MCF 10A (cell line): ENCODE measurements at regions of chr10 and their contacts with region 1.

Region 1: DNA sequence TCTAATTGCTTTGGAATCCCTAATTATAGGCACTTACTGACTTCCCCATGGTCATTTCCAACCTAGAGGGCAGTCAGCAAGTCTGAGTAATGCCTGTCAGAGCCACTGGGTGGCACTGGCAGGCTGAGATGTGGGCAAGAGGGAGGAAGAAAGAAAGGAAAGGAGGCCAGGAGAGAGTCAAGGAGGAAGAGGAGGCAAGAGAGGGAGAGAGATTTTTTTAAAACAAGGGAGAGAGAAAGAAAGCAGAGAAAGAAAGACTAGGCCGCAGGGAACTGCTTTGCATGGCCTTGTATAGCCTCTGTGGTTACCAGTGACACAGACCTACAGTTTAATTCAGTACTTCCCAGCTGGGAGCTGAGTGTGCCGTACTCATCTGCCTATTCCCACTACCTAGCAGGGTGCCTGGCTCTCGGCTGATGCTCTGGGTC is 210.4 kb upstream of the ADO start:
- DNase-seq: peak; percentile 64
- H3K4me3 Mint-ChIP-seq: no peak overlapping the region
- H3K27ac Mint-ChIP-seq: no peak overlapping the region
- H3K4me1 Mint-ChIP-seq: peaks cover 6% of the 10 kb centered on the region
- H3K27me3 Mint-ChIP-seq: no peaks in the 10 kb centered on the region
- CTCF ChIP-seq: peak; percentile 87

Region 2: DNA sequence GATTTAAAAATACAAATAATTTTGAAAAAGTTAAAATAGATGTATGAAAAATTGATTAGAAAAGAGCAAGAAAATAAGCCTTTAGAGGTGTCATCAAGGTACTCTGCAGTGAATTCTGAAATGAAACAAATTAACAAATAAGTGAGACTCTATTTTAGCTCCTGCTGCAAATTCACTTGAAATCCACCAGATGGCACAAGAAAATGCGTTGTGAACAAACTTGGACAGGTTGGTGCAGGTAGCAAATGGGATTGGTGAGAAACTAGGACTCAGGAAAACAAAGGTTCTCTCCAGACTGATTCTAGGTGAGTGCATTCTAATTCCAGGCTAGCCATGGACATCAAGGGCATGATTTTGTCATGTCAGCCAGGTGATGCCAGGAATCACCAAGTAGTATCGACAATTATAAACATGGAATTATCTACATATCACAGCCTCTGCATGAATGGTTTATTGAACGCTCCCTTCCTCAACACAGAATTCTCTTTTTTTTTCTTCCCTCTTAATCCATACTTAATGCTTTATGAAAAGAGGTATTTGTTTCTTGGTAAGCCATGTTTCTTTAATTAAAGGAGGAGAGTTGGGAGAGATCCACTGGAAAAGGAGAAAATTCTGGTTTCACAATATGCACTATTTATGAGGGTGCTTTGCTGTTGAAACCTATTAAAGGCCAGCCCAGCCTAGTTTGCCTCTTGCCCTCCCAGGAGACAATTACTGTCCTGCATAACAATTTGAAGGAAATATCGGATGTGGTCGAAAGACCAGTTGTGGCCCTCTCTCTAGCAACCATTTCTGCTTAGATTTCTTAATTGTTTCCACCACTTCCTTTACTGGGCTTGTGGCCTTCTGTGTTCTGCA is 101.9 kb before region 1 on chr10:
- CTCF ChIA-PET with region 1: interaction called, 4 read pairs
- POLR2A ChIA-PET with region 1: no interaction called
- intact Hi-C with region 1: loop called (anchors 2 kb)
- DNase-seq: peak; percentile 61
- H3K4me3 Mint-ChIP-seq: no peak overlapping the region
- H3K27ac Mint-ChIP-seq: no peak overlapping the region
- H3K4me1 Mint-ChIP-seq: no peaks in the 10 kb centered on the region
- H3K27me3 Mint-ChIP-seq: no peaks in the 10 kb centered on the region
- CTCF ChIP-seq: peak; percentile 48

Region 3: DNA sequence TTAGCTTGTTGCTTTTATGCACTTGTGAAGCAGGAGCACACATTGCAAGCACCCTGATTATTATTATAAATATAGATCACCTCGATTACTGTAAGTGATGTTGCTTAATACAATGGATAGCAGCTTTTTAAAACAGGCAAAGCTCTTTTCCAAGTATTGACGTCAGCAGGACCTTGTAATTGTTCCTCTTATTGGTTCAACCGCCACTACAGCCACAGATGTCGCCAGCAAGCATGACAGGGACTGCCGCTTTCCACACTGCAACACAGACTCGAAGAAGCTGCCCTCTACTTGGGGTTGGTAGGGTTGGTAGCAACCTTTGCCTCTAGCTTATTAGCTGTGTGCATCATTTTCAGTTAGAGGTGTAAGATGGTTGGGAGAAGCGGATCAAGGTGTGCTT is 52.3 kb before region 1 on chr10:
- CTCF ChIA-PET with region 1: no interaction called
- POLR2A ChIA-PET with region 1: no interaction called
- intact Hi-C with region 1: no loop called
- DNase-seq: no peak
- H3K4me3 Mint-ChIP-seq: no peak overlapping the region
- H3K27ac Mint-ChIP-seq: no peak overlapping the region
- H3K4me1 Mint-ChIP-seq: peaks cover 7% of the 10 kb centered on the region
- H3K27me3 Mint-ChIP-seq: no peaks in the 10 kb centered on the region
- CTCF ChIP-seq: no peak

Region 4: DNA sequence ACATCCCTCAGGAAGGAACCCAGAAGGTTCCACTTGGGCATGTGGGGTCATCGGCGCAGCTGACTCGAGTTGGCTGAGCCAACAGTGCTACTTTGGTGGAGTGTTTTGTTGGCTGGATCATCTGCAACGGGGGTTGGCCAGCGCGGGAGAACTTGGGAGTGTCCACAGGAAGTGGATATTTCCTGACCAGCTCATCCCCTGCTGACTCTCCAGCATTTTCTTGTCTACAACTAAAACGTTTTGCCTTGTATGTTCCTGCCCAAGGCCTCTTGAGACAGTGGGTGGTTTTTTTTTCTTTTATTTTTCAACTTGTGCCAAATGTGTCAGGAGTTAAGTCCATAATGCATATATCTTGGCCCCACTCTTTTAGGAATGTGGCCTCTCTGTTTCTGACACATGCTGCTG is 11.3 kb before region 1 on chr10:
- CTCF ChIA-PET with region 1: interaction called, 13 read pairs
- POLR2A ChIA-PET with region 1: no interaction called
- intact Hi-C with region 1: no loop called
- DNase-seq: peak; percentile 9
- H3K4me3 Mint-ChIP-seq: no peak overlapping the region
- H3K27ac Mint-ChIP-seq: peak overlapping the region; percentile 70
- H3K4me1 Mint-ChIP-seq: peaks cover 9% of the 10 kb centered on the region
- H3K27me3 Mint-ChIP-seq: no peaks in the 10 kb centered on the region
- CTCF ChIP-seq: no peak

Region 5: GRCh38 chr10:63767138-63767801 is 1173.2 kb after region 1 on chr10:
- CTCF ChIA-PET with region 1: interaction called, 3 read pairs
- POLR2A ChIA-PET with region 1: no interaction called
- intact Hi-C with region 1: loop called (anchors 10 kb)
- DNase-seq: peak; percentile 29
- H3K4me3 Mint-ChIP-seq: no peak overlapping the region
- H3K27ac Mint-ChIP-seq: no peak overlapping the region
- H3K4me1 Mint-ChIP-seq: peaks cover 13% of the 10 kb centered on the region
- H3K27me3 Mint-ChIP-seq: peaks cover under 1% of the 10 kb centered on the region
- CTCF ChIP-seq: peak; percentile 39